ENCODE measurements at regions of chr1 and their contacts with region 1.

Region 1: DNA sequence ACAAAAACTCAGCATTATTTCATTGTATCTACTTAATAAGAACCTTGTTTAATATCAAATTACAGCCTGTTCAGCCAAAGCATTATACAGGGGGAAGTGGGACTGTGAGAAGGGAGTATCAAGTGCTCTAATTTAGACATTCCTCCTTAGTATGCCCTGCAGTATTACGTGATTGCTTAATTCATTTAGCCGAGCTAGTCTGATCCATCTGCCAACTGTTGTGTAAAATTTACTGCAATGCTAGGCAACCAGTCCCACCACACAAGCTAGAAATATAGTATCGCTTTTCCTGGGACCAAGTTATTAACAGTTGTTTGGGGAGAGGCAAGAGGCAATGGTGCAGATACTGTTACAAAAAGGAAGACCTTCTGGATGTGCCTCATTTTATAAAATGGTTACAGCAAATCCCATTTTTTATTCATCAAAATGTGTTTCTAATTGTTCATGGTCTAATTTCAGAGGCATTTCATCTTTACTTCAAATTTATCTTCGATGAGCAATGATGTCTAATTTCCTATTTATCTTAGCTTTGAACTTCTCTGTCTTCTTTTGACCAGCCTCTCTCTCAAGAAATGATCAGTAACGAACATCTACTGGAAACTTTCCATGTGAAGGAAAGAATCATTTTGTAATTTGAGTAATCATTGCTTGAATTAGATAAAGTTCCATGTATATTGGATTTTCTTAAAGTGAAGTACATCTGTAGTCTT is 283.3 kb downstream of the DUSP10 start:
- DNase-seq: no peak
- H3K4me3 ChIP-seq: no peak overlapping the region
- H3K27ac ChIP-seq: no peak overlapping the region
- H3K4me1 ChIP-seq: no peaks in the 10 kb centered on the region
- CTCF ChIP-seq: no peak

Region 2: DNA sequence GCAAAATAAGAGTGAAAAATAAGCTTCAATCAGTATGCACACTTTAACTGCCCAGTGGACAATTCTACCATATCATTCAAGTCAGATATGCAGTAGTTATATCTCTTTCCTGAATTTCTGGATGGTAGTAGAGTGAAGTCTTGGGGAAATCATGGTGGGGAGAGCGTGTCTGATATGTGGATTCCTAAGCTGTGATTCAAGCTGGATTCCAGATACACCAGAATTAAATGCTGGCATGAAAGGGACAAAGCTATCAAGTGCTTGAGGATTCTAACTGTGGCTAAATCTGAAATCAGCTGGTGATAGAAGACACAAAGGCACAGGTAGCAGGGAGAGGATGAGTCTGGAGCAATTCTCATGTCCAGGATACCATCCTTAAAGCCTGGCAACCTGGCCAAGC is 40.3 kb before region 1 on chr1:
- CTCF ChIA-PET with region 1: no interaction called
- POLR2A ChIA-PET with region 1: no interaction called
- intact Hi-C with region 1: no loop called
- DNase-seq: no peak
- H3K4me3 ChIP-seq: no peak overlapping the region
- H3K27ac ChIP-seq: no peak overlapping the region
- H3K4me1 ChIP-seq: no peaks in the 10 kb centered on the region
- CTCF ChIP-seq: no peak

Region 3: GRCh38 chr1:222420633-222421032 is 962.0 kb after region 1 on chr1:
- CTCF ChIA-PET with region 1: no interaction called
- POLR2A ChIA-PET with region 1: interaction called, 11 read pairs
- intact Hi-C with region 1: no loop called
- DNase-seq: no peak
- H3K4me3 ChIP-seq: no peak overlapping the region
- H3K27ac ChIP-seq: no peak overlapping the region
- H3K4me1 ChIP-seq: no peaks in the 10 kb centered on the region
- CTCF ChIP-seq: no peak